H1 (cell line): ENCODE measurements at regions of chr3 and their contacts with region 1.

Region 1: DNA sequence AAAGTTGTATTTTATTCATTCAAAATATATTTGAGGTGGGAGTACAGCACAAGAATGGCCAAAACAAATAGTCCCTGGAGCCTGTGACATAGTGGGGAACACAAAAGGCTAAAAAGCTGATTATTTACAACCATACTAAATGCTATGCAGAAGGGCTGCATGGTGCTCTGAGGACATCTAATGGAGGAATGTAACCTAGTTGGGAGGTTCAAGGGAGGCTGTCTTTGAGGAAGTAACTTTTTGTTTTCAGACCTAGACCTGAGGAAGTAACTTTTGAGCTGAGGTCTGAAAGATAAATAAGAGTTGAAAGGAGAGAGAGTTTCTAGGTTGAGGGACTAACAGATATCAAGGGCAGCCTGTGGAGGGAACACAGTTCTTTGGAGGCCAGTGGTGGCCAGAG is 34.8 kb upstream of the RASA2 start:
- DNase-seq: no peak
- H3K4me3 ChIP-seq: no peak overlapping the region
- H3K27ac ChIP-seq: no peak overlapping the region
- H3K4me1 ChIP-seq: peaks cover 0 to 3% (median 0%) of the 10 kb centered on the region in 4 experiments; a peak in 3 of 7 replicates
- H3K27me3 ChIP-seq: no peaks in the 10 kb centered on the region
- CTCF ChIP-seq: peak in 2 of 3 experiments; percentile 65 to 77; a peak in 3 of 4 replicates
- EP300 ChIP-seq: no peak
- POLR2A ChIP-seq: no peak
- RAD21 ChIP-seq: peak; percentile 90 to 92

Region 2: DNA sequence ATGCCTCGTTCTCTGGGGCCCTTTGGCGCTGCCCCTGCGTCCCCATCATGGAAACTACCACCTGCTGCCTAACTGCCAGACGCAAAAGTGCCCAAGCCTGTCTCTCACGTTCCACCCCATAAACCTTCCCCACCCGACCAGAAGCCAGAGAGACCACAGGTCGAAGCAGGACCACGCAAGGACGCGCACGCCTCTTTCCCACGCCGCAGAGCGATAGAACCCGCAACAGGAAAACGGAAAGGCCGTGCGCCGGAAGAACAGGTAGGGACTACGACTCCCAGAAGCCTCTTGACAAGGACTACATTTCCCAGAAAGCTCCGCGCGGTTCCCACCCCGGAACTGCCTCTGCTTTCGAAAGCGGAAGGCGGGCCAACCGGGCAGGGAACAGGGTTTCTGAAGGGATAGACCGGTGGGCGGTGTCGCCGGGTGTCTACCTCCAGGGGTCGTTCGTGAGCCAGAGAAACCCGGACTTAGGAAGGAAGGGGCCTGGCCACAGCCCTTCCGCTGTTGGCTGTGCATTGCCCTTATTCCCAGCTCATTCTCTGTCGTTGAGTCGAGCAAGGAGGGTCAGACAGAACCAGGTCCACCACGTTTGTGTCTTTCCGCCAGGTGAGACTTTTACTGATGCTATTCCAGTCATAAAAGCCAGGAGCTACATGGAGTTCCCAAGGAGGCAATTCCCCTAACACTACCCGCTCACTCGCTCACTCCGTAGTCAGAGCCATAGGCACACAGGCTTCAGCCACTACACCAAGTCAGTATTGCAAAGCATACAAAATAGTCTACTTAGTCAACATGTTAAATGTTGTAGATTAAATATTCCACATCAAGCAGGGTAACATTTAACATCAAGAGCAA is 140.3 kb before region 1 on chr3:
- CTCF ChIA-PET with region 1: interaction called, 349 read pairs
- POLR2A ChIA-PET with region 1: interaction called, 3 read pairs
- DNase-seq: peak; percentile 94 to 98
- H3K4me3 ChIP-seq: peak overlapping the region; percentile 69 to 99 (median 85)
- H3K27ac ChIP-seq: no peak overlapping the region
- H3K4me1 ChIP-seq: peaks cover 0 to 4% (median 2%) of the 10 kb centered on the region in 4 experiments; a peak in 4 of 7 replicates
- H3K27me3 ChIP-seq: peaks cover 0 to 7% (median 3%) of the 10 kb centered on the region in 4 experiments; a peak in 1 of 7 replicates
- CTCF ChIP-seq: peak; percentile 74 to 91 (median 84)
- EP300 ChIP-seq: no peak
- POLR2A ChIP-seq: peak; percentile 34 to 73
- RAD21 ChIP-seq: peak; percentile 89

Region 3: GRCh38 chr3:141353652-141354495 is 98.2 kb before region 1 on chr3:
- CTCF ChIA-PET with region 1: interaction called, 101 read pairs
- POLR2A ChIA-PET with region 1: no interaction called
- DNase-seq: no peak
- H3K4me3 ChIP-seq: no peak overlapping the region
- H3K27ac ChIP-seq: no peak overlapping the region
- H3K4me1 ChIP-seq: no peaks in the 10 kb centered on the region
- H3K27me3 ChIP-seq: no peaks in the 10 kb centered on the region
- CTCF ChIP-seq: no peak
- EP300 ChIP-seq: no peak
- POLR2A ChIP-seq: no peak
- RAD21 ChIP-seq: no peak

Region 4: GRCh38 chr3:141370065-141370533 is 81.9 kb before region 1 on chr3:
- CTCF ChIA-PET with region 1: interaction called, 11 read pairs
- POLR2A ChIA-PET with region 1: no interaction called
- DNase-seq: no peak
- H3K4me3 ChIP-seq: no peak overlapping the region
- H3K27ac ChIP-seq: no peak overlapping the region
- H3K4me1 ChIP-seq: peaks cover 2 to 13% (median 8%) of the 10 kb centered on the region in 4 experiments
- H3K27me3 ChIP-seq: no peaks in the 10 kb centered on the region
- CTCF ChIP-seq: peak; percentile 5 to 50 (median 35)
- EP300 ChIP-seq: 0 out of 3 replicates have a peak, but pooled peaks of 1 of the 2 experiments have one; percentile 31
- POLR2A ChIP-seq: no peak
- RAD21 ChIP-seq: peak; percentile 21 to 46; a peak in 2 of 4 replicates

Region 5: DNA sequence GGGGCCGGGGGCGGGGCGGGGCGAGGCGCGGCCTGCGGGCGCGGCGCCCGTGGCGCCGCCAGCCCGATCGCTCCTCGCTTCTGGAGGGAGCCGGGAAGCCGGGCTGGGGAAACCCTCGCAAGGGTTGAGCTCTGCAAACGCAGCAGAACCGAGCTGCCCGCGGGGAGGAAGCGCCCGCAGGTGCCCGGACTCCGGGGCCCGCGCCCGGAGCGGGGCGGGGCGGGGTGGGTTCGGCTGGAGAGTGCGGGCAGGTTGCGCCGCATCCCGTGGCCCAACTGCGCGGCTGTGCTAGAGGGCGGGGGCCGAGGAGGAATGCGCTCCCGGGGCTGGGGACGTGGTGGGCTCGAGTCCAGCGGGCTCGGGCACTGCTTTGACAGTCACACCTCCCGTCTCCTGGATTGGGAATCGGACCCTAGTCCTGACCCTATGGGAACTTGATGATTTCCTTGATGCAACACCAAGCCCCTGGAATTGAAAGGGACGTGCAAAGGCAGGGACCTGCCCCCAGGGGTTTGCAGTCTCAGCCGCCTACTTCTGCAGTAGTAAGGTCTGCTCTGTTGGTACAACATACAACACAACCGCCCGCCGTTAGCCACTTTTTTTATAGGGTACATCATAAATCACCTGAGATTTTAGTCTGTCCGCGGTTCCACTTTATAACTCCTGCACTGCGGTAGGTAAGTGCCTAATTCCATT is 49.4 kb before region 1 on chr3:
- CTCF ChIA-PET with region 1: interaction called, 15 read pairs
- POLR2A ChIA-PET with region 1: no interaction called
- DNase-seq: peak in 1 of 2 experiments; percentile 77
- H3K4me3 ChIP-seq: peak overlapping the region; percentile 66 to 71 (median 66)
- H3K27ac ChIP-seq: peak overlapping the region; percentile 54; the same call in 1 of the 2 replicates
- H3K4me1 ChIP-seq: peaks cover 0 to 7% (median 4%) of the 10 kb centered on the region in 4 experiments; a peak in 4 of 7 replicates
- H3K27me3 ChIP-seq: peaks cover 0 to 17% (median 8%) of the 10 kb centered on the region in 4 experiments; a peak in 5 of 7 replicates
- CTCF ChIP-seq: no peak
- EP300 ChIP-seq: no peak
- POLR2A ChIP-seq: peak in 1 of 2 experiments; percentile 45; a peak in 2 of 3 replicates
- RAD21 ChIP-seq: no peak

Region 6: GRCh38 chr3:141426404-141427034 is 25.5 kb before region 1 on chr3:
- CTCF ChIA-PET with region 1: interaction called, 42 read pairs
- POLR2A ChIA-PET with region 1: no interaction called
- DNase-seq: no peak
- H3K4me3 ChIP-seq: no peak overlapping the region
- H3K27ac ChIP-seq: no peak overlapping the region
- H3K4me1 ChIP-seq: peaks cover 0 to 8% (median 3%) of the 10 kb centered on the region in 4 experiments; a peak in 4 of 7 replicates
- H3K27me3 ChIP-seq: no peaks in the 10 kb centered on the region
- CTCF ChIP-seq: no peak
- EP300 ChIP-seq: no peak
- POLR2A ChIP-seq: no peak
- RAD21 ChIP-seq: no peak

Region 7: DNA sequence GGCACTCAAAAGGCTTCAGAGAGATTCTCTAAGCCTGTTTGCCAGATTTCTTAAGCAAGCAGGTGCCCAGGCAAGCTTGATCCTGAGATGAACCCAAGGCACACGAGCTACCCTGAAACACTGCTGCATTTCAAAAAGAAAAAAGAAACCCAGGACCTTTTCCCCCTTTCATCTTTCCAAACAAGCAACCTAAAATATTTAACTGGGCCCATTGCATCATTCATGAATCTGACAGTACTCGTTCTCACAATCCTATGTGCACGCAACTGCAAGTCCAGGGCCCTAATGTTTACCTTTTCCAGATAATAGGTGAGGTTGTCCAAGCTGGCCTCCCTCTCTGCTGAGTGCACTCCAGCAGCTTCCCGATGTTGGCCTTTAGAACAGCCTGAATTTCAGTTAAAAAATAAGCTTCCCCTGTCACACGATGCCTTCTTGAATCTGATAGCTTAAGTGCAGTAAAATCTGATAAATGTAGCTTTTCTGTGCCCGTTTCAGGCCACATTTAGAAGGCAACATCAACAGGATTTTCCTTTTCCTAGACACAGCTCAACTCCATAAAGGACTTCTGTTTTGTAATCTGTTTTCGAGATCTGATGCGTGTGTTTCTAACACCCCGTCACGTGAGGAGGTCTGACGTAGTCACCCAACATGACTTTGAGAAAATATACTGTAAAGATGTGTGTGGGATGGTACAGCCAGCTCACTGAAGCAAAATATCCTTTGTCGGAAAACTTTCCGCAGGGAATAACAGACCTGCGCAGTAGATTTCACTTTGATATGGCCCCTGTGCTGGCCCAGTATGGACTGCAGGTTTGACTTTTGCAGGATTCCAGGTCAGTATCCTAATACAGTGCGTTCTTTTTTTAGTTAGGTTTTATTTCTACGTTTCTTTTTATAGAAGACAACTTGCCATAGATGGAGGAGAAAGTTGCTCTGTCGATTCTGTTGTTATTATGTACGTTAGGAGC is 20.3 kb before region 1 on chr3:
- CTCF ChIA-PET with region 1: interaction called, 185 read pairs
- POLR2A ChIA-PET with region 1: no interaction called
- DNase-seq: no peak
- H3K4me3 ChIP-seq: no peak overlapping the region
- H3K27ac ChIP-seq: no peak overlapping the region
- H3K4me1 ChIP-seq: peaks cover 0 to 6% (median 0%) of the 10 kb centered on the region in 4 experiments; a peak in 3 of 7 replicates
- H3K27me3 ChIP-seq: no peaks in the 10 kb centered on the region
- CTCF ChIP-seq: no peak
- EP300 ChIP-seq: no peak
- POLR2A ChIP-seq: no peak
- RAD21 ChIP-seq: no peak